ENCODE measurements at regions of chr3 and their contacts with region 1.

Region 1: GRCh38 chr3:32056559-32057290 is 49.7 kb upstream of the GPD1L start:
- DNase-seq: no peak
- ATAC-seq: no peak
- H3K4me3 Mint-ChIP-seq: no peak overlapping the region
- H3K27ac Mint-ChIP-seq: no peak overlapping the region
- H3K4me1 Mint-ChIP-seq: peaks cover 10% of the 10 kb centered on the region
- H3K27me3 Mint-ChIP-seq: no peaks in the 10 kb centered on the region
- CTCF ChIP-seq: no peak

Region 2: DNA sequence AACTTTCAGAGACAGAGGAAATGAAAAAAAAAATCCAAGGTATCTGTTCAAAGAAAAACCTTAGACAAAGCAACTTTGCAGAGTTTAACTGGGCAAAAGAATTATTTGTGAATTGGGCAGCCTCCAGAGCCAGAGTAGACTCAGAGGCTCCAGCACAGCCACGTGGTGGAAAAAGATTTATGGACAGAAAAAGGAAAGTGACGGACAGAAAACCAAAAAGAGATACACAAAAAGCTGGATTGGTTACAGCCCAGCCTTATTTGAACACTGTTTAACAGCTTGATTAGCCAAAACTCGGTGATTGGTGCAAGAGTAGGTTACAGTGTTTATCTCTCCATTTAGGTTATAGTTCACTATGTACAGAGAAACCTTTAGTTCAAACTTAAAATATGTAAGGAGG is 26.0 kb after region 1 on chr3:
- CTCF ChIA-PET with region 1: no interaction called
- POLR2A ChIA-PET with region 1: no interaction called
- intact Hi-C with region 1: loop called (anchors 1 kb)
- DNase-seq: no peak
- ATAC-seq: no peak
- H3K4me3 Mint-ChIP-seq: no peak overlapping the region
- H3K27ac Mint-ChIP-seq: no peak overlapping the region
- H3K4me1 Mint-ChIP-seq: peaks cover 24% of the 10 kb centered on the region
- H3K27me3 Mint-ChIP-seq: no peaks in the 10 kb centered on the region
- CTCF ChIP-seq: no peak

Measured in activated B cell treated with CpG ODN at 0.5 μM for 24 hours (primary cell).